Thyroid gland (tissue), 4 donors: ENCODE measurements at regions of chr17 and their contacts with region 1.

Region 1: GRCh38 chr17:63425482-63425881 is 20.6 kb downstream of the CYB561 start:
- DNase-seq: peak; percentile 71 to 73
- H3K4me3 ChIP-seq: no peak overlapping the region
- H3K27ac ChIP-seq: no peak overlapping the region
- H3K4me1 ChIP-seq: no peaks in the 10 kb centered on the region
- H3K27me3 ChIP-seq: no peaks in the 10 kb centered on the region
- CTCF ChIP-seq: peak; percentile 68 to 96 (median 92)
- POLR2A ChIP-seq: no peak

Region 2: DNA sequence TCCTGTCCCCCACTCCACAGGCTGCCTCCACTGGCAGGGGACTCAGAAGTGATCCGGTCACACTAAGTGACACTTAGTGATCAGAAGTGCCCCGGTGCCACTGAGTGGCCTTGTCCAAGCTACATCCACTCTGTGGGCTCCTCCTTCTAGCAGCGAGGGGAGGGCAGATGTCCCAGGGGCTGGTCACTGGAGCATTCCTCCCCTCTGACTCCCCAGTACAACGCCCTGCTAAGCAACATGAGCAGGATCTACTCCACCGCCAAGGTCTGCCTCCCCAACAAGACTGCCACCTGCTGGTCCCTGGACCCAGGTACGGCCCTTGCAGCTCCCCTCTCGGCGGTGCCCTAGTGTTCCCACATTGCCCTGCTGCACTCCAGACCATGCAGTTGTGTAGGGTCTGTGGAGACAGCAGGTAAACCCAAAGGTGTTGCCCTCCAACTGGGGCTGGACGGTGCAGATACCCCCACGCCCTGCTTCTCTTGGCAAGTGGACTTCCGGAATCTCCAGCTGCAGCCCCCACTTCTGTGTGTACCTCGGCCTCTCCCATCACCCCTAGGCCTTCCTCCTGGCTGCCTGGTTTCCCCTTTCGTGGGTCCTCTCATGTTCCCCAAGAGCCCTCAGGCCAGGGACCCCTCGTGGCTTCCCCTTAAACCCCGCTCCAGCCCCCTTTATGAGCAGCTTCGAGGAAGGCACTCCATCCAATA is 53.5 kb after region 1 on chr17:
- intact Hi-C with region 1: loop called (anchors 5 kb)
- DNase-seq: peak; percentile 75 to 76
- H3K4me3 ChIP-seq: no peak overlapping the region
- H3K27ac ChIP-seq: no peak overlapping the region
- H3K4me1 ChIP-seq: peaks cover 5 to 41% of the 10 kb centered on the region in 2 donors
- H3K27me3 ChIP-seq: no peaks in the 10 kb centered on the region
- CTCF ChIP-seq: peak; percentile 23 to 82 (median 62)
- POLR2A ChIP-seq: no peak